CD8-positive, alpha-beta T cell (primary cell): ENCODE measurements at regions of chr18 and their contacts with region 1.

Region 1: DNA sequence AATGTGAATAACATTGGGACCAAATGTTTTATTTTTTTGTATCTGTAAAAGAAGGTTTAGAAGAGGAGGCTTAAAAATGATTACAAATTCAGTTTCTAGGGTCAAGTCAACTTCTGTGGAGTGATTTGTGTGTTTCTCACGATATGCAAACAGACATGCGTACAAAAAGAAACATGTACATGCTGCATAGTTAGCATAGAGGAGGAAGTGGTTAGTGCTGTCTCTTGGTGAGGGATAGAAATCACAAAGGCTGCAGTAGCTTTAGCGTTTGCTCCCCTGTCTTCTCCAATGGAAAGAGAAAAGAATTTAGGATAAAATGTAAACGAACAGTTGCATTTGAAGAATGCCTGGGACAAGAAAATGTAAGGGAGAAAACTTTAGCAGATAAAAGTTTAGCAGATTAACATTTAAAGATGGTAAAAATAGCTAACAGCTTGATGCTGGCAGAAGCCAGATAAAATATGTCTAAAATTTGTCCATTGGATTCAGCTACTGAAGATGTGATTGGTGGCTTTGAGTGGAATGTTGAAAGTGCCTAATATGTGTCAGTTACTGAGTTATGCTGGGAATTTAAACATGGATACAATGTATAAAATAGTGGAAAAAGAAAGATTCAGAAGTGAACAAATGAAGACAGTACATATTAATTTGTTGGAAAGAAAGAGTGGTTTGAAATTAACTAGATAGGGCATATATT is 44.9 kb downstream of the MALT1 start:
- DNase-seq: peak in 2 of 9 experiments; percentile 44 to 71
- ATAC-seq: peak; percentile 80
- H3K4me3 ChIP-seq: peak overlapping the region in 1 of 2 experiments; percentile 5
- H3K4me3 Mint-ChIP-seq: peak overlapping the region; percentile 73
- H3K27ac ChIP-seq: peak overlapping the region; percentile 7 to 23
- H3K27ac Mint-ChIP-seq: peak overlapping the region; percentile 93
- H3K4me1 ChIP-seq: peaks cover 38% of the 10 kb centered on the region
- H3K4me1 Mint-ChIP-seq: peaks cover 64% of the 10 kb centered on the region
- H3K27me3 ChIP-seq: no peaks in the 10 kb centered on the region
- H3K27me3 Mint-ChIP-seq: no peaks in the 10 kb centered on the region
- CTCF ChIP-seq: no peak

Region 2: DNA sequence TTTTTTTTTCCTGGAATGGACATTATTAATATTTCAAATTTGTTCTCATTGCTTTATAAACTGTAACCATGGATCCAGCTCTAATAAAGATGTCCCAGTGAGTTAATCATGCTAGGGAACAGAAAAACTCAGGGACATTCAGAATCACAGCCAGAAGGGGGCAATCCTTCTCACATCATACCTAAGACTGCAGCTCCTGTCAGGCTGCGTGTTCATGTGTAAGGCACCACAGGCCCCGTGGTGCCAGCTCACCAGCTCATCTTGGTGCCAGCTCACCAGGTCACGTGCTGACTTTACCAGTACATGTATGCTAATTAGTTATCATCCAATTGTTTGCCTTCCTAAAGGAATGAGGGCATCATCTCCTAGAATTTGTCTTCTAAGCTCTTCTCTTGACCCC is 756.9 kb before region 1 on chr18:
- CTCF ChIA-PET with region 1: no interaction called
- POLR2A ChIA-PET with region 1: no interaction called
- intact Hi-C with region 1: no loop called
- DNase-seq: peak in 2 of 9 experiments; percentile 8 to 38
- ATAC-seq: peak; percentile 31
- H3K4me3 ChIP-seq: no peak overlapping the region
- H3K4me3 Mint-ChIP-seq: no peak overlapping the region
- H3K27ac ChIP-seq: no peak overlapping the region
- H3K27ac Mint-ChIP-seq: no peak overlapping the region
- H3K4me1 ChIP-seq: no peaks in the 10 kb centered on the region
- H3K4me1 Mint-ChIP-seq: no peaks in the 10 kb centered on the region
- H3K27me3 ChIP-seq: no peaks in the 10 kb centered on the region
- H3K27me3 Mint-ChIP-seq: peaks cover 14% of the 10 kb centered on the region
- CTCF ChIP-seq: no peak

Region 3: DNA sequence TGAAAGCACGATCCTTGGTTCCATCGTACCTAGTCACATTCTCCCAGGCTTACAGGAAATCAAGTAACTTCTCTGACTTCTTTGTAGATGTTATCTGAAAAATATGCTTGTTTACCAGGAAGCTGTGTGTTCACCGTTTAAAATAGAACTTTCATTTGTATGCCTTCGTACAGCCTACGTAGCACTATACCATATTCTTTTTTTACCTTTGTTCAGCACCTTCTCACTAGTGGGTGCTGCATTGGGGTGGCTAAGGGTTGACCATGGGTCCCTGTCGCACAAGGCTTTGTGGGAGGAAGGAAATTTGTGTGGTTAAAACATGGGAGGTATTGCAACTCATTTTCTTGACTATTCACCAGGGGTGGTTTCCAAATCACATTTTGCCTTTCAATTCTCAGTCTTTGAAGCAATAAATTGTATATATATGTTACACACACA is 28.3 kb before region 1 on chr18:
- CTCF ChIA-PET with region 1: no interaction called
- POLR2A ChIA-PET with region 1: no interaction called
- intact Hi-C with region 1: loop called in 1 of 2 experiments (anchors 2 kb)
- DNase-seq: peak; percentile 19 to 91 (median 61)
- ATAC-seq: peak; percentile 96
- H3K4me3 ChIP-seq: no peak overlapping the region
- H3K4me3 Mint-ChIP-seq: peak overlapping the region; percentile 77
- H3K27ac ChIP-seq: peak overlapping the region; percentile 40 to 67
- H3K27ac Mint-ChIP-seq: peak overlapping the region; percentile 97
- H3K4me1 ChIP-seq: peaks cover 52% of the 10 kb centered on the region
- H3K4me1 Mint-ChIP-seq: peaks cover 78% of the 10 kb centered on the region
- H3K27me3 ChIP-seq: no peaks in the 10 kb centered on the region
- H3K27me3 Mint-ChIP-seq: no peaks in the 10 kb centered on the region
- CTCF ChIP-seq: no peak

Region 4: GRCh38 chr18:58819051-58819450 is 102.8 kb after region 1 on chr18:
- CTCF ChIA-PET with region 1: no interaction called
- POLR2A ChIA-PET with region 1: no interaction called
- intact Hi-C with region 1: no loop called
- DNase-seq: peak in 5 of 9 experiments; percentile 12 to 72 (median 30)
- ATAC-seq: peak; percentile 48
- H3K4me3 ChIP-seq: no peak overlapping the region
- H3K4me3 Mint-ChIP-seq: peak overlapping the region; percentile 9
- H3K27ac ChIP-seq: no peak overlapping the region
- H3K27ac Mint-ChIP-seq: no peak overlapping the region
- H3K4me1 ChIP-seq: peaks cover 12% of the 10 kb centered on the region
- H3K4me1 Mint-ChIP-seq: peaks cover 15% of the 10 kb centered on the region
- H3K27me3 ChIP-seq: peaks cover 10 to 14% of the 10 kb centered on the region in 2 experiments
- H3K27me3 Mint-ChIP-seq: peaks cover 60% of the 10 kb centered on the region
- CTCF ChIP-seq: no peak